IMR-90 (cell line): ENCODE measurements at regions of chr10 and their contacts with region 1.

Region 1: GRCh38 chr10:117174439-117175214 is 22.7 kb upstream of the KCNK18 start:
- DNase-seq: peak; percentile 57
- ATAC-seq: peak; percentile 88
- H3K4me3 ChIP-seq: no peak overlapping the region
- H3K27ac ChIP-seq: no peak overlapping the region
- H3K4me1 ChIP-seq: no peaks in the 10 kb centered on the region
- H3K27me3 ChIP-seq: peaks cover 21% of the 10 kb centered on the region
- CTCF ChIP-seq: peak; percentile 86
- POLR2A ChIP-seq: no peak
- RAD21 ChIP-seq: peak; percentile 79

Region 2: DNA sequence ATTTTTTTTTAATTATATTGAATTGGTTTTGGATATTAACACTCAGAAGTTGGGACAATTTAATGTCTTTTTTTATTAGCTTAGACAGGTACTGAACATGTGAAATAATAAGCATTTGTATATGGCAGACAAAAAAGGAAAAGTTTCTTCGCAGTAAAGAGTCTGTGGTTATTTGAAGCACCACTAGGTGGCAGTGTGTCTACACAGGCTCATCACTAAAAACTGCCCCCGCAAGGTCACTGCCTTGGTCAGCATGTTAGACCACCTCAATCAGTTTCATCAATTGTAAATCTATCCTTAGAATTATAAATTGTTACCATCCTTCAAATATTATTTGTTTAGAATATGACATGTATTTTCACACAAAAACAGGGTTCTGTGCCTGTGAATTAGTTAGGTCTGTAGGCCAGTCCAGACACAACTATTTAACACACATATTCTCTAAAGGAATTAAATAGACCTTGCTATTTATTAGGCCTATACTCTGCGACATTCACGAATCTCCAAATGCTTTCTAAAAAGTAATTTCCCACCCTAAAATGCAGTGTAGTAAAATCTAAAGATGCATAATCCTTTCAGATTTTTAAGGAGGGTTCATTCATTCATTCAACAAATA is 730.0 kb before region 1 on chr10:
- CTCF ChIA-PET with region 1: no interaction called
- POLR2A ChIA-PET with region 1: no interaction called
- dilution Hi-C with region 1: no loop called
- in situ Hi-C with region 1: no loop called
- intact Hi-C with region 1: loop called (anchors 2 kb)
- DNase-seq: peak; percentile 31
- ATAC-seq: peak; percentile 73
- H3K4me3 ChIP-seq: no peak overlapping the region
- H3K27ac ChIP-seq: no peak overlapping the region
- H3K4me1 ChIP-seq: no peaks in the 10 kb centered on the region
- H3K27me3 ChIP-seq: no peaks in the 10 kb centered on the region
- CTCF ChIP-seq: peak; percentile 67
- POLR2A ChIP-seq: no peak
- RAD21 ChIP-seq: peak; percentile 47

Region 3: DNA sequence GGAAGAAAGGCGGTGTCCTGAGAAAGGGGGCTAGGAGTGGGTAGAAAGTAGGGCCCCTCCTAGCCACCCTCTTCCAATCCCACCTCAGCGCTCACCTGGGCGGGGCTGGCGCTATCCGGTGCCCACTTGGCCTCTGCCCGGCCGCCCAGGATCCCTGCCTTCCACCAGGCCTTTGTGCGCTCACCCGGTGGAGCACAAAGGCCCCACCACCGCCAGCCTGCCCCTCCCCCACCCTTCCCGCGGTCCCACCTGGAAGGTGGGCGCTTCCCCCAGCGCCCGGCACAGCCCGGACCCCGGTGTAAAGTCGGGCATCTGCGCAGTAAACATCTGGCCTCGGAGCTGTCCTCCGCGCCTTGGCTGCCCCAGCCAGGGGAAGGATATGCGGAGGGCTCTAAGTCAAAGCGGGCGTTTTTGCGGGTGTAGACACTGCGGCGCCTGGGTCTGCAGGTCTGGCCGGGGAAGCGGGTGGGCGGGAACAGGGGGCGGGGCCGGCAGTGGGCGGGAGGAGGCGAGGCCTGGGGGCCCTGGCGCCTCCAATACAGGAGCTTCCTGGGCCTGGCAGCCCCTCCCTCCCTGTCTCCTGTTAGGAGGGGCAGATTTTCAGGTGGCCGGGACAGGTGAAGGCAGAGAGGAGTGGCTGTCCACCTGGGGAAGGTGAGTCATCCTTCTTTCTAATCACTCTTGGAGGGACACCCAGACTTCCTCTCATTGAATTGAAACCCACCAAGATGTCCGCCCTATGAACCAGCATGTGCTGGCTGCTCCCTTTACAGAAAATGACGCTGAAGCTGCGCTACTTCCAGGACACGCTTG is 504.6 kb before region 1 on chr10:
- CTCF ChIA-PET with region 1: no interaction called
- POLR2A ChIA-PET with region 1: no interaction called
- dilution Hi-C with region 1: no loop called
- in situ Hi-C with region 1: loop called (anchors 5 kb)
- intact Hi-C with region 1: no loop called
- DNase-seq: no peak
- ATAC-seq: no peak
- H3K4me3 ChIP-seq: no peak overlapping the region
- H3K27ac ChIP-seq: no peak overlapping the region
- H3K4me1 ChIP-seq: peaks cover 8% of the 10 kb centered on the region
- H3K27me3 ChIP-seq: no peaks in the 10 kb centered on the region
- CTCF ChIP-seq: no peak
- POLR2A ChIP-seq: no peak
- RAD21 ChIP-seq: no peak

Region 4: DNA sequence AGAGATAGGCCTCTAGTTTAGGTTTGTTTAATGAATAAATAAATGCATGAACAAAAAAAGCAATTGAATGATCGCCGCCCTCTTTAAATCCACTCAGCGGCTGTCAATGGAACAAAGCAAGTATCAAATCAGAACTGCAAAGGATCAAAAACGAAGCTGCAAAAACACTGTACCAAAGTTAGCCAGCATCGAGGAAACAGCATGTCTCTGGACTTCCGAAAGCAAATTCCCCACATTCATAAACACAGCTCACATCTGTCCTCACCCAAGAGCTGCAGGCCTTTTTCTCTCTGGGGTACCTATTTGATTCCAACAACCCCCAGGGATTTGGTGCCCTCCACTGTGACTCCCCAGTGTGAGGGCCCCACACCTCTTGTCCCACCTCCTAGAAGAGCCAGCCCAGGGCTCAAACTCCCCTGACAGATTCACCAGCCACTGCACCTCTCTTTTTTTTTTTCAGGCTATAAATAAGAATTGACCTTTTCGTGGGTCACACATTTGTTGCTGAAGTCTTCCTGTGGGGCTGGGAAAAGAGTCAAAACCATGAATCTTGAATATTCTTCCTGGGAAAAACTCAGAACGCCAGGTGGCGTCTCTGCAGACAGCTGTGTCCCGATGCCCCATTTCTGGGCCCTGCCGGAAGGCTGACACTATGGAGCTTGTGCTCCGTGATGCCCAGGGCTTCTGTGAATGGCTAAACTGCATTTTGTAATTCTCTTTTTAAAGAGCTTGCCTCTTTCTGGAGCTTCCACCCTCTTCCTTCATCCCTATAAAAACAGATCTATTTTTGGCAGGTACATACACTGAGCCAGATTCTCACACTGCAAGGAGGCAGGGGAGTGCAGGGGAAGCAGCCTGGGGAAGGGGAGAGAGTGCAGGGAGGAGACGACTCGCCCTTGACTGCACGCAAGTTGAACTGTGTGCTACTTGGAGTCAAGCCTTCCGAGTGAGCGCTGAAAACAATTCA is 484.0 kb before region 1 on chr10:
- CTCF ChIA-PET with region 1: interaction called, 3 read pairs
- POLR2A ChIA-PET with region 1: no interaction called
- dilution Hi-C with region 1: no loop called
- in situ Hi-C with region 1: no loop called
- intact Hi-C with region 1: loop called (anchors 2 kb)
- DNase-seq: peak; percentile 28
- ATAC-seq: no peak
- H3K4me3 ChIP-seq: no peak overlapping the region
- H3K27ac ChIP-seq: no peak overlapping the region
- H3K4me1 ChIP-seq: peaks cover 20% of the 10 kb centered on the region
- H3K27me3 ChIP-seq: no peaks in the 10 kb centered on the region
- CTCF ChIP-seq: 0 out of 2 replicates have a peak, but pooled peaks have one; percentile 23
- POLR2A ChIP-seq: no peak
- RAD21 ChIP-seq: peak; percentile 32; the same call in 1 of the 2 replicates

Region 5: DNA sequence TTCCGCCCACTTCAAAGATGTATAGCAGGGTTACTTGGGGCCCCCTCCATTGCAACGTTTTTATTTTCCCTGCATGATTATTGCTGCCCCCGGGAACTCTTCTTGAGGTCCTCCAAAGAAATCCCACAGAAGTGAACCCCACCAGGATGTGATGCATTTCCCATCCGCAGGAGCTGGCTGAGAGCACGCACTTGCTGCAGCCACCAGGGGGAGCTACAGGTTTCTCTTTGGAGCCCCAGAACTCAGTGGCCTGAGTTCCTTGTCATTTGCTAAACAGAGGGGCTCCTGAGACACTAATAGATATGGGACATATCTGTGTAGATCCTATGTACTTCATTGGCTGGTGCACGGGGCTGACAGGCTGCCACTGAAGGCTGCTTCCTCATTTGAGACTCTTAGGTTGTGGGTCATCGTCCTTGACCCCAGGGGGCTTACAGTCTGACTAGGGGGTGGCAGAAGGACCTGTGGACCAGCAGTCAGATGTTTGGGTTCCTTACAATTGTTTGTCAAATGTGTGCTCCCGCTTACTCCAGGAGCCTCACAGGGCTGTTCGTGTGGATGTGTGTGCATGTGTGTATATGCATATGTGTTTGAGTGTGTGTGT is 377.6 kb before region 1 on chr10:
- CTCF ChIA-PET with region 1: interaction called, 28 read pairs
- POLR2A ChIA-PET with region 1: no interaction called
- dilution Hi-C with region 1: no loop called
- in situ Hi-C with region 1: loop called (anchors 5 kb)
- intact Hi-C with region 1: loop called (anchors 1 kb)
- DNase-seq: peak; percentile 61
- ATAC-seq: peak; percentile 96
- H3K4me3 ChIP-seq: no peak overlapping the region
- H3K27ac ChIP-seq: no peak overlapping the region
- H3K4me1 ChIP-seq: no peaks in the 10 kb centered on the region
- H3K27me3 ChIP-seq: peaks cover 13% of the 10 kb centered on the region
- CTCF ChIP-seq: peak; percentile 94
- POLR2A ChIP-seq: peak; percentile 46; the same call in 1 of the 2 replicates
- RAD21 ChIP-seq: peak; percentile 96

Region 6: DNA sequence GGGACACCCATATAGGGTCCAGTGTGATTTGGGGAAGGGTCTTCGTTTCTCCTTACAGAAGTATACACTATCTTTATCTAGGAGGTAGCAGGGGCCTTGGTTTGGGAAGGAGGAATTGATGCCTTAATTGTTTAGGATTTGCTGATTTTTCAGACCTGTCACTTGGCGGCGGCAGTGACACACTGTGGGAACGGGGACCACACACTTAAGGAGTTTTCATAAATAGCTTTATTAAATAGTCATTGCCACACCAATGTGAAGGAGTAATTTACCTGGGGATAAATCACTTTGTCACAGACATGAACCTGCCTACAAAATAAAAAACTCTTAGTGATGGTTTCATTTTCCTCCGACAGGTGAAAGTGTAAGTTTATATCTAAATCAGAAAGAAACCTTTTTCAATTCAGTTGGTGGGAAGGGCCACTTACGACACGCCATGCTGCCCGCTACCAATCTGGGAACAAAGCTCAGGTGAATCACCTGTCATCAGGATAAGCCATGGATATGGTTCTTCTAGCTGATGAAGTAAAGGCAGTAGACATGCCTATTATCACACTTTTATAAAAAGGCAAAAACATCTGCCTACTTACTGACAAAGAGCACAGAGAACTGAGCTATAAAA is 337.6 kb before region 1 on chr10:
- CTCF ChIA-PET with region 1: interaction called, 3 read pairs
- POLR2A ChIA-PET with region 1: no interaction called
- dilution Hi-C with region 1: no loop called
- in situ Hi-C with region 1: no loop called
- intact Hi-C with region 1: loop called (anchors 2 kb)
- DNase-seq: no peak
- ATAC-seq: no peak
- H3K4me3 ChIP-seq: no peak overlapping the region
- H3K27ac ChIP-seq: no peak overlapping the region
- H3K4me1 ChIP-seq: no peaks in the 10 kb centered on the region
- H3K27me3 ChIP-seq: peaks cover 33% of the 10 kb centered on the region
- CTCF ChIP-seq: peak; percentile 40
- POLR2A ChIP-seq: no peak
- RAD21 ChIP-seq: peak; percentile 53